ENCODE measurements at regions of chr13 and their contacts with region 1.

Region 1: DNA sequence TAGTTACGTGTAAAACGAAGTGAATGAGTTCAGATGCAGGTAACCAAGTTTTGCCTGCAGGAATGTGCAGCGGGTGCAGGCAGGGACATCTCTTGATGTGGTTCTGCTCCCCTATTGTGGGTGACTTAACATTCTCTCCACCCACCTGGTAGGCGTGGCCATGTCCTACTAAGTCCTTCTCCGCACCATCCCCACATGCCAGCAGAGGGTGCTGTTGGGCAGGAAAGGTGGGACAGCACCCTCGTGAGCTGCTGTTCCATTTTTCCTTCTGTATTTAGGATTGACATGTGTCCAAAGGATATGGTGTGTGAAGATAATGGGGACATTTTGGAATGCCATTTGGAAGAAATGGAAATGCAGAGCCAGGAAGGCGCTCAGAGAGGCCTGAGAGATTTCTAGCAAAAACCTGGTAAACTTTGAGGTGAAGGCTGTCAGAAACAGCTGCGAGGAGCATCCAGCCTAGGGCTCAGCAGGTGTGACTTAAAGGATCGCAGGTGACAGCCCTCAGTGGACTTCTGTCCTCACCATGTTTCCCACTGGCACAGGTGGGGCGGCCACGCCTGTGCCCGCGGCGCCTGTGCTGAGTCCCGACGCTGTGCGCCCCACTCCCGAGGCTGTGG is 26.2 kb upstream of the MCF2L start:
- DNase-seq: peak; percentile 83 to 92 (median 87)
- ATAC-seq: peak; percentile 100
- H3K4me3 ChIP-seq: no peak overlapping the region
- H3K27ac ChIP-seq: no peak overlapping the region
- H3K4me1 ChIP-seq: peaks cover 0 to 12% of the 10 kb centered on the region in 2 experiments; a peak in 2 of 5 replicates
- H3K27me3 ChIP-seq: peaks cover 0 to 22% of the 10 kb centered on the region in 2 experiments; a peak in 2 of 5 replicates
- CTCF ChIP-seq: peak; percentile 87 to 94 (median 92)
- EP300 ChIP-seq: no peak
- POLR2A ChIP-seq: no peak
- RAD21 ChIP-seq: peak; percentile 67 to 80

Region 2: DNA sequence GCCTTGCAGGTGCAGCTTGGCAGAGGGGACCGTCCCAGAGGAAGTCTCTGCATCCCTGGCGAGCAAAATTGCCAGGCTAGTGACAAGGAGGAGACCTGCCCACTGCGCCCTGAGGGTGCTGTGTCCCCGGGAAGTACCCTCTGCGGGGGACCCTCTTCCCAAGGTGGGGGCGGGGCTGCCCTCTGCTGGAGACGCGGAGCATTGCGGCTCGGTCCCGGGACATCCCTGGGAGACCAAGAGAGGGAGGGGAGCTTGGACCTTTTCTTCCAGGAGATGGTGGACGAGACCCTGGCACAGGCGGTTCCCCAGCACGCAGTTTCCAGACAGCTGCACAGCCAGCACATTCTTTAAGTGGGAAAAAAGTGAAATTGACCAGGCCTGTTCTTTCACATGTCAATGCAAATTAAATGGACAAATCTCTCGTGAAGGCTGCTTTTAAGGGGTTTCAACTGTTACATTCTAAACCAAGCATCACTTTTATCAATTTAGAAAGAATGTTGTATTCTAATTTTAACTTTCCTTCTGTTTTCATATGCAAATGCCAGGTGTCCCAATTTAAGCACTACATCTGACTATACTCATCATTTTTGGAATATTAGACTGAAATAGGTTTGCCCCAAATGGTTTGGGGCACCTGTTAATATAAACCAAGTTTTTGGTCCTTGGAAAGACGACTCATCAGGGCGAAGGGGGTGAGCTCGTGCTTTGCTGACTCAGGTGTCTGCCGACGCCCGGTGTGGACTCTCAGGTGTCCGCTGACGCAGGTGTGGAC is 86.9 kb after region 1 on chr13:
- CTCF ChIA-PET with region 1: no interaction called
- POLR2A ChIA-PET with region 1: no interaction called
- in situ Hi-C with region 1: no loop called
- intact Hi-C with region 1: loop called (anchors 2 kb)
- DNase-seq: peak; percentile 46 to 81 (median 70)
- ATAC-seq: peak; percentile 83
- H3K4me3 ChIP-seq: no peak overlapping the region
- H3K27ac ChIP-seq: no peak overlapping the region
- H3K4me1 ChIP-seq: peaks cover 0 to 4% of the 10 kb centered on the region in 2 experiments; a peak in 1 of 5 replicates
- H3K27me3 ChIP-seq: peaks cover 10 to 66% of the 10 kb centered on the region in 2 experiments; a peak in 4 of 5 replicates
- CTCF ChIP-seq: peak; percentile 63 to 83 (median 74)
- EP300 ChIP-seq: no peak
- POLR2A ChIP-seq: no peak
- RAD21 ChIP-seq: peak; percentile 27 to 68

Region 3: GRCh38 chr13:113393563-113394338 is 451.0 kb after region 1 on chr13:
- CTCF ChIA-PET with region 1: interaction called, 4 read pairs
- POLR2A ChIA-PET with region 1: no interaction called
- in situ Hi-C with region 1: loop called (anchors 25 kb)
- intact Hi-C with region 1: loop called (anchors 2 kb)
- DNase-seq: peak; percentile 78 to 85 (median 82)
- ATAC-seq: peak; percentile 97
- H3K4me3 ChIP-seq: peak overlapping the region; percentile 41
- H3K27ac ChIP-seq: no peak overlapping the region
- H3K4me1 ChIP-seq: peaks cover 0 to 18% of the 10 kb centered on the region in 2 experiments; a peak in 3 of 5 replicates
- H3K27me3 ChIP-seq: peaks cover 0 to 27% of the 10 kb centered on the region in 2 experiments; a peak in 2 of 5 replicates
- CTCF ChIP-seq: peak; percentile 41 to 92 (median 69)
- EP300 ChIP-seq: no peak
- POLR2A ChIP-seq: no peak
- RAD21 ChIP-seq: peak; percentile 56 to 76; a peak in 3 of 4 replicates

Region 4: DNA sequence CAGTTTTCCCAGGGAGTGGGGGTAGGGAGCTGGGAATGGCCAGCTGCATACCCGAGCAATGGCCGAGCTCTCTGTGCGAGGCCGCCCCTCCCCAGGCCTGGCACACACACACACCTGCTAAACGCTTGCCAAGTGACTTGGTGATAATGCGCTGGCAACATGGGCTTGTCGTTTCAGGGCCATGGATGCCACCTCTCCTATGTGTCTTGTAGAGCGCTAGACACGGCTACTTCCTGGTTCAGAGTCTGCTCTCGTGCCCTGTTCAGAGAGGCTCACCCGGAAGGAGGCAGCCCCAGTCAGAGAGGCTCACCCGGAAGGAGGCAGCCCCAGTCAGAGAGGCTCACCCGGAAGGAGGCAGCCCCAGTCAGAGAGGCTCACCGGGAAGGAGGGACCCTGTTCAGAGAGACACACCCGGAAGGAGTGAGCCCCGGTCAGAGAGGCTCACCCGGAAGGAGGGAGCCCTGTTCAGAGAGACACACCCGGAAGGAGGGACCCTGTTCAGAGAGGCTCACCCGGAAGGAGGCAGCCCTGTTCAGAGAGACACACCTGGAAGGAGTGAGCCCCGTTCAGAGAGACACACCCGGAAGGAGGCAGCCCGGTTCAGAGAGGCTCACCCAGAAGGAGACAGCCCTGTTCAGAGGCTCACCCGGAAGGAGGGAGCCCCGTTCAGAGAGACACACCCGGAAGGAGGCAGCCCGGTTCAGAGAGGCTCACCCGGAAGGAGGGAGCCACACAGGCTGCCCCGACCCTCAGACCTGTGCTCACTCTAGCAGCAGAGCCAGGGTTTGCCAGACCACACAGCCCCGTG is 506.3 kb after region 1 on chr13:
- CTCF ChIA-PET with region 1: no interaction called
- POLR2A ChIA-PET with region 1: no interaction called
- in situ Hi-C with region 1: no loop called
- intact Hi-C with region 1: loop called (anchors 5 kb)
- DNase-seq: peak; percentile 69 to 93 (median 72)
- ATAC-seq: peak; percentile 91
- H3K4me3 ChIP-seq: peak overlapping the region; percentile 73
- H3K27ac ChIP-seq: peak overlapping the region; percentile 92
- H3K4me1 ChIP-seq: peaks cover 5 to 28% of the 10 kb centered on the region in 2 experiments; a peak in 4 of 5 replicates
- H3K27me3 ChIP-seq: no peaks in the 10 kb centered on the region
- CTCF ChIP-seq: no peak
- EP300 ChIP-seq: 0 out of 2 replicates have a peak, but pooled peaks have one; percentile 7
- POLR2A ChIP-seq: peak; percentile 73
- RAD21 ChIP-seq: no peak

Measured in K562 (cell line).